ENCODE measurements at regions of chr11 and their contacts with region 1.

Region 1: DNA sequence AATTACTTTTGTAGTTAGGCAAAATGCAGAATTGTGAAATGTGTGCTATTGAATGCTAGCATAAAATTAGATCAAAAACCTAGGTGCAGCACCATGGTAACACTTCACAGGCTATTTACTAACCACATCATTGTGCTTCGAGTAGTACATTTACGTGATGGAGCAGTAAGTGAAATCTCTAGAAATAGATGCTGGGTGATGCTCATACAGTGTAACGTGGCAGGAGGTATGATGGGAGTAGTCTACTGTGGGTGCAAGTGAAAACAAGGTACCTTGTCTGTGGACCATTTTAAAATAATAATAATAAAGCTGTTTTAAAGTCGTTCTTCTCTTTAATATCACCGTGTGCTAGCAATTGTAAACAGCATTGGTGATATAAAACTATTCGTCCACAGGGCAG is 132.3 kb downstream of the DYNC2H1 start:
- DNase-seq: no peak
- ATAC-seq: no peak
- H3K4me3 ChIP-seq: no peak overlapping the region
- H3K27ac ChIP-seq: no peak overlapping the region
- H3K4me1 ChIP-seq: no peaks in the 10 kb centered on the region
- H3K27me3 ChIP-seq: no peaks in the 10 kb centered on the region

Region 2: GRCh38 chr11:103202048-103202651 is 39.4 kb before region 1 on chr11:
- intact Hi-C with region 1: no loop called
- DNase-seq: no peak
- ATAC-seq: no peak
- H3K4me3 ChIP-seq: no peak overlapping the region
- H3K27ac ChIP-seq: no peak overlapping the region
- H3K4me1 ChIP-seq: no peaks in the 10 kb centered on the region
- H3K27me3 ChIP-seq: no peaks in the 10 kb centered on the region

Region 3: DNA sequence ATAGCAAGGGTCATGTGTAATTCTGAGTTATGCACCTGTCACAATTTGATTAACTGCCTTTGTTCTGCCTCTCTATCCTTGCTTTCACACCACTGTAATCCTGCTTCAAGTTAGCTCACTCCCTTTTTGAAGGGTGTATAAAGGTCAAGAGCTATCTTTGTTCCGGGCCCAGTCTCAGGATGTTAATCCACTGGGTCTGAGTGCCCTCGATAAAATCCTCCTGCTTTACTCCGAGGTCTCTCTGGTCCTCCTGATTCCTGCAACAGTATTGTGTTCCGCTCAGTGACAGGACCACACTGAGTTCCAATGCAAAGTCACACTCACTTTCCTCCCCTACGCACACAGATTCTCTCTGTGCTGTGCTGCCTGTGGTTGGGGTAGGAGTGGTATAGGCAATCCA is 54.1 kb after region 1 on chr11:
- intact Hi-C with region 1: loop called in 1 of 2 experiments (anchors 10 kb)
- DNase-seq: no peak
- ATAC-seq: no peak
- H3K4me3 ChIP-seq: no peak overlapping the region
- H3K27ac ChIP-seq: no peak overlapping the region
- H3K4me1 ChIP-seq: no peaks in the 10 kb centered on the region
- H3K27me3 ChIP-seq: no peaks in the 10 kb centered on the region